ENCODE measurements at regions of chr9 and their contacts with region 1.

Region 1: DNA sequence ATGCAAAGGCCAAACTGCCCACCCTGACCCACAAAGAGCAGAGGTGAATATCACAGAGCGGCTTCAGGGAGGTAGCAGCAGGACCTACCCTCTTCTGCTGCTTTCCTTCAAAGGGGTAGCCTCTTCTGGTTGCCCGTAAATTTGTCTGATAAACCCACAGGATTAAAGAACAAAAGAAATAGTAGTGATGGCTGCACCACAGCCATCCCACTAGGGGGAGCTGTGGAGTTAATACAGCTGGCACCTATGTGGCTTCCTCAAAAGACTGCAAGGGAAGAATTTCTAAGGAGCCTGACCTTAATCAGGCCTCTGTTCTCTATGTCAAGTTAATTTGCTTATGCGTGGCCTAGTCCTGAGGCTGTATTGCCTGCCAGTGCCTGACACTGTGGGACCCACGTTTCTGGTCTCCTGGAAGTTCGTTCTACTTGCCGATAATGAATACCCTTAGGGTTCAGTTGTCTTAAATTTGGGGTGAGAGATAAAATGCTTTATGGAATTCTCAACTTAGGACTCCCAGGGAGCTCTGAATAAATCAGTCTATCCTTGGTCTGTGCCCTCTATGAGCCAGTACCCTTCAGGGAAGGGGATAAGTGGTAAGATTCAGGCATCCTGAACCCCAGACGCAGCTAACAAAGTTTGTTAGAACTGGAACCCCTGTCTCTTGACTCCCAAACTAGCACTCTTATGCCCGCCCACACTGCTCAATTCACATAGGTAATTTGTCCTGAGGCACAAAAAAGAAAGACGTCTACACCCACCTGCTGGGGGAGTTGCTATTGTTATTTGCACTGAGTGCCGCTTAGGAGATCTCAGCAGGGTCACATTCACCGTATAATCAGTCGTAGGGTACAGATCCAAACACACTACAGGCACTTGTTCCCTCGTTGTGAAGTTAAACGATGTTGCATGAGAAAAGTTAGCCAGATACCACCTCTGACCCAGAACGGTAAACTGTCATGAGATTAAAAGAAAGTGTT is 77.1 kb downstream of the SUSD1 start:
- DNase-seq: peak; percentile 85

Region 2: DNA sequence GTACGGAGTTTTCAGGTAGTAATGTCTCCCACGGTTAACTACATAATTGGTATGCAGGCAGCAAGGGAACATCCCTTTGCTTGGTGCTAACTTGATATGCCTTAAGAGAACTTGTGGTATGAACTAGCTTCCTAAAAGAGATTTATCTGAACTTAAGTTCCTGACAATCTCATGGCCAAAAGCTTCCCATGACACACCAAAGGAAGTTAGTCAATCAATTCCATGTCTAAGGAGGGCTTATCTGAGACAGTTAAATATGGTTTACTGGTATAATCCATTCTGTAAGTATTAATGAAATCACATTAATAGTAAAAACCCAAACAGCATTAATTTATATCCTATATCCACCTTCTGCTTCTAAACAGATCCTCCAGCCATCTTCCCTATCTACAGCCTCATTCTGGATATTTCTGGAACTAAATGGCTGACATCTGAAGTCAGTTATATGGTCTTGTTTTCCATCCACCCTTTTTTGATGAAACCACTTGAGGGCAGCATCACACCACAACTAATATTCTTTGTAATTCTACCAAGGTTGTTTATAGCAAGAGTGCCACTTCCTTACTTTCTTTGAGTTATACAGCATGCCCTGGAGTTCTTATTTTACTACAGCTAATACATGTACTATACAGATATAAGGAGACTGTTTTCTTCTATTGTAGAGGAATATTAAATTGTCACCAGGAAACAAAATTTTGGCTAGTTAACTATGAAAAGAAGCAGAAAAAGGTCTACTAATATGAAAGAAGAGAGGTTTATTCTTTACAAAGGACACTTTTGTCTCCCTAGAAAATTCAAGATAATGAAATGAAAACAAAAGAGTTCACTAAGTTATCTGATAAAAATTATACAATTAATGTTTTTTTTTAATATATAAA is 338.0 kb before region 1 on chr9:
- in situ Hi-C with region 1: loop called (anchors 25 kb)
- DNase-seq: peak; percentile 85

Region 3: GRCh38 chr9:112361601-112362000 is 263.6 kb after region 1 on chr9:
- in situ Hi-C with region 1: loop called (anchors 25 kb)
- DNase-seq: peak; percentile 62

Region 4: DNA sequence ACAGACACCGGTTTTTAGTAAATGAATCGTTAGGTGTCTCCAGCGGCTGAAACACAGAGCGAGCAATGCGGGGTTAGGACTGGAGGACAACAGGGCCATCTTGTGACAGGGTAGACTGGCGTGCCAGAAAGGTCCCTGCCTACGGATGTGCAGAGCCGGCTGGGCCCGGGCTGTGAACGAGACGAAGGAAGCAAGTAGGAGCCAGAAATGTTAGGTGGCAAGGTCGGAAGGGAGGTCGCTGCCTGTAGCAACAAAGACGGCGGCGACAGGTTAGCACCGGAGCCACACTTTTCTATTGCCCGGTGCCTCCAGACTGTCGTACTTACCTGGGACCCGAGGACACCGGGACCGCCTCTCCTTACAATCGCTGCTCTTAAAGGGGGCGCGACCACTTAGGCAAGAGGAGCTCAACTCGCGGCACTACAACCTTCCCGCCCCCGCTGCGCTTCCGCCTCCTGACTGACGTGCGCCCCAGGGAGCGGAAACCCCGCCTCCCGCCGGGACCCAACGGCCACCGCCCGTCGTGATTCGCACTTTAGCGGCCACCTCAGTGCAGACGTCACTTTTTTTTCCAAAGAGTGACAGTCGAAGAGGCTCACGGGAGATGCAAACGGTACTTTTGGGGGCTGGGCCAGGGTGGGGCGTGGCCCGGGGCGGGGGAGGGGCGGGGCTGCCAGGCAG is 619.8 kb after region 1 on chr9 and contains the start of gene INIP:
- in situ Hi-C with region 1: loop called (anchors 25 kb)
- DNase-seq: peak; percentile 99